ENCODE measurements at regions of chr2 and their contacts with region 1.

Region 1: DNA sequence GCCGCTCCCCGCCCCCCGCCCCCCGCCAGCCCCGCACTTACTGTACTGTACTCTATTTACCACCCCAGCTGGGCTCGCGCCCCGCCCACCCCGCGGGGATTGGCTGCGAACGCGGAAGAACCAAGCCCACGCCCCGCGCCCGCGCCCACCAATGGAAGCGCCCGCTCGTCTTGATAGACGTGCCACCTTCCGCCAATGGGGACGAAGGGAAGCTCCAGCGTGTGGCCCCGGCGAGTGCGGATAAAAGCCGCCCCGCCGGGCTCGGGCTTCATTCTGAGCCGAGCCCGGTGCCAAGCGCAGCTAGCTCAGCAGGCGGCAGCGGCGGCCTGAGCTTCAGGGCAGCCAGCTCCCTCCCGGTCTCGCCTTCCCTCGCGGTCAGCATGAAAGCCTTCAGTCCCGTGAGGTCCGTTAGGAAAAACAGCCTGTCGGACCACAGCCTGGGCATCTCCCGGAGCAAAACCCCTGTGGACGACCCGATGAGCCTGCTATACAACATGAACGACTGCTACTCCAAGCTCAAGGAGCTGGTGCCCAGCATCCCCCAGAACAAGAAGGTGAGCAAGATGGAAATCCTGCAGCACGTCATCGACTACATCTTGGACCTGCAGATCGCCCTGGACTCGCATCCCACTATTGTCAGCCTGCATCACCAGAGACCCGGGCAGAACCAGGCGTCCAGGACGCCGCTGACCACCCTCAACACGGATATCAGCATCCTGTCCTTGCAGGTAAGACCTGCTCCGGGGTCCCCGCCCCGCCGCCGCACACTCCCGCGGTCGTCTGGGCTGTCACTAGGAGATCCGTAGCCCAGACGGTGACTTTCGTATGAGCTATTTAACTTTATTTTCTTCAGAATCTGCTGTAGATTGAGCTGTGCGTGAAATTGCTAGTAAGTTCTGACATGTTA is at the start of gene ID2:
- DNase-seq: peak; percentile 98
- H3K4me3 ChIP-seq: peak within 1 kb of the TSS; percentile 66 to 81 (median 77)
- H3K27ac ChIP-seq: peak within 1 kb of the TSS; percentile 34
- H3K4me1 ChIP-seq: peaks cover 26% of the 10 kb centered on the region
- H3K27me3 ChIP-seq: no peaks in the 10 kb centered on the region
- CTCF ChIP-seq: no peak
- total RNA-seq, gene ID2: 4.4 to 8.7 TPM

Region 2: DNA sequence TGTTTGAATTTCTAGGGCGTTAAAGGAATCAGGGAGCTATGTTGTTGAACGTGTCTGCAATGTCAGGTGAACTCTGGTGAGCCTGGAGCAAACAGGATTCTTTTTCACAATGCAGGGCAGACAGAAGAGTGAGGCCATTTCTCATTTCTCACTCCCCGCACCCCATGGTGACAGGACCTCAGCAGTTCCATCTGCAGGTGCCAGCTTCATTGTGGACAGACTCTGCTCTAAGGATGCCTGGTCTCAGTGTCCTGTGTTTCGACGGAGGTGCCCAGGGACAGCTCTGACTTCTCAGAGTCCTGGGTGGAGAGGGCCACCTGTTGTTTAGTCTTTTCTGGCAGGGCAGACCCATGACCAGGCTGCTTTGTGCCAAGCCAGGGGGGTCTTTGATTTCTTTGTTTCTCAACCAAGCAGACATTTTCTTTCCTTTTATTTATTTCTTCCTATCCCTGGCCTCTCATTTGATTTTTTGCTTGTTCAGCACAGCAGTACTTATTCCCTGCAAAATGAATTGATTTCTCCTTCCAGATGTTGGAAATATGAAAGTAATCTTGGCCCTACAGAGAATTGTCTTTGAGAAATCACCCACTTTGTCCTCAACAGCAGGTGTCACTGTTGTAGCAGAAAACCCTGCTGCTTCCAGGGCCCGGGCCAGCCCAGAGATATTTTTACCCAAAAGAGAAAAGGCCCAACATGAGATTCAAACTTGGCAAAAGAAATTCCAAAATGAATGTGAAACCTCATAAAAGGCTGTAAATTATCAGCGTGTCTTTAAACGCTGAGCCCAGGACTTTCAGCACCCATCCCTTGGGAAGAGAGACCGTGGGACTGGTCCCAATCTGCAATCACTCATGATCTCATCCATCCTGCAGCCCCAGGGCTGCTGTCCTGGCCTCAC is 1563.2 kb before region 1 on chr2:
- CTCF ChIA-PET with region 1: no interaction called
- dilution Hi-C with region 1: no loop called
- in situ Hi-C with region 1: loop called (anchors 10 to 25 kb)
- intact Hi-C with region 1: loop called (anchors 1 kb)
- DNase-seq: peak; percentile 11
- H3K4me3 ChIP-seq: no peak overlapping the region
- H3K27ac ChIP-seq: no peak overlapping the region
- H3K4me1 ChIP-seq: no peaks in the 10 kb centered on the region
- H3K27me3 ChIP-seq: no peaks in the 10 kb centered on the region
- CTCF ChIP-seq: peak; percentile 66 to 67

Region 3: GRCh38 chr2:7203055-7203467 is 1479.0 kb before region 1 on chr2:
- CTCF ChIA-PET with region 1: interaction called, 3 read pairs
- dilution Hi-C with region 1: no loop called
- in situ Hi-C with region 1: loop called (anchors 10 to 25 kb)
- intact Hi-C with region 1: loop called (anchors 1 kb)
- DNase-seq: peak; percentile 26
- H3K4me3 ChIP-seq: no peak overlapping the region
- H3K27ac ChIP-seq: no peak overlapping the region
- H3K4me1 ChIP-seq: no peaks in the 10 kb centered on the region
- H3K27me3 ChIP-seq: no peaks in the 10 kb centered on the region
- CTCF ChIP-seq: peak; percentile 85 to 89

Region 4: DNA sequence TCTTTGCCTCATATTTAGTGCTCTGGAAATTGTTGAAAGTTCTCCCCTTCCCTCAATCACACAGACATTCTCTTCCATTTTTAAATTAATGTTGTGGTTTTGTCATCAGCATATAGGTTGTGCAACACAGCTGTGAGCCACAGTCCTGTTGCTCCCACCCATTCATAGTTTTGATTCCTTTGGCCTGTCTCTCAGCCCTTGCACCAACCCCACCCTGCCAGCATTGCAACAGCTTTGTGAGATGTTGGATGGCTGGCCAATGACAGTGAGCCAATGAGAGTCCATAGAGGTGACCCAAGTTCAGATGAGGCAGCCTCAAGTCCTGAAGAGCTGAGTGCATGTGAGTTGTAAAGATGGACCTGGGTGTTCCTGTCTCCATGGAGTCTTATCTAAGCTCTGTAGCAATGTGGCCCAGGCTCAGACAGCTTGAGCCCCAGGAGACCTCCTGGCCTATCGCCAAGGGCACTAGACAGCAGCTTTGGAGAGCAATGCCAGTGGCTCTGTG is 989.3 kb before region 1 on chr2:
- CTCF ChIA-PET with region 1: no interaction called
- dilution Hi-C with region 1: no loop called
- in situ Hi-C with region 1: loop called in 1 of 2 experiments (anchors 25 kb)
- intact Hi-C with region 1: loop called (anchors 10 kb)
- DNase-seq: peak; percentile 96
- H3K4me3 ChIP-seq: no peak overlapping the region
- H3K27ac ChIP-seq: peak overlapping the region; percentile 79
- H3K4me1 ChIP-seq: peaks cover 19% of the 10 kb centered on the region
- H3K27me3 ChIP-seq: no peaks in the 10 kb centered on the region
- CTCF ChIP-seq: no peak

Region 5: GRCh38 chr2:8004250-8004681 is 677.8 kb before region 1 on chr2:
- CTCF ChIA-PET with region 1: no interaction called
- dilution Hi-C with region 1: no loop called
- in situ Hi-C with region 1: no loop called
- intact Hi-C with region 1: loop called (anchors 10 kb)
- DNase-seq: peak; percentile 91
- H3K4me3 ChIP-seq: no peak overlapping the region
- H3K27ac ChIP-seq: no peak overlapping the region
- H3K4me1 ChIP-seq: peaks cover 14% of the 10 kb centered on the region
- H3K27me3 ChIP-seq: no peaks in the 10 kb centered on the region
- CTCF ChIP-seq: no peak